ENCODE measurements at regions of chr19 and their contacts with region 1.

Region 1: DNA sequence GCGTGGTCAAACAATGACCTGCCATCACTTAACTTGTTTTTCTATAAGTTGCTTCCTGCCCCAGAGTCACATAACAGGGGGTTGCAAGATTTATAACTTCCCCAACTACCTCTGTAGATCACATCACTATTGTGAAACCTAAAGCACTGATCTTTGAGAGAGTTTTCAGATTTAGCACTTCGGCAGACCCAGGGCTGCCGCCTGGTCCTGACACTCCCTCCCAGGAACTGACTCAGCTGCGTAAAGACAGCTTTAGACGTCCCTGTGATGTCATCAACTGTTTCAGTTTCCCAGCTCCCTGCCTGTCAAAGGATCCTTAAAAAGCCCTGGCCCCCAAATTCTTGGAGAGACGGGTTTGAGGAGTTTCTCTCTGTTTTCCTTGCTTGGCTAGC is 33.3 kb downstream of the IGFL2 start:
- DNase-seq: no peak

Region 2: DNA sequence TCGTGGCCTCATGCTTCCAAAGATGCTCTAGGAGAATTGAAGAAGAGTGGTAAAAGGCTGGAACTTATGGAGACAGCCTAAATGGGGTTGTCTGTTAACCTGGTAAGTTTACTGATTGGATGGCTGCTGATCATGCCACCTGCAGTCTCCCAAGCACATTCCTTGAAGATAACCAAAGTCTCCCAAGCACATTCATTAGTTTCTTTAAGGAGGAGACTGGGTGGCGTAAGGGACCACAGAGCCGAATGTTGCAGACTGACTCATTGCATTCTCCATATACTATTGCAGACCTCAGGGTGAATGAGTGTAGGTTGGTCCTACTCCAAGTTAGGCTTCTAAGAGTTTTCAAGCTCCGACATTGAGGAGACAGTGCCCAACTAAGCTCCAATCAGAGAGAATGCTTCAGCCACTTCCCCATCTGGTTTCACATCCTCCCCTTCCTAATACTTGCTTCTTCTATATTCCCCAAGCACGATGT is 56.7 kb before region 1 on chr19 and contains the start of gene IGFL3:
- intact Hi-C with region 1: loop called in 1 of 2 experiments (anchors 5 kb)
- DNase-seq: no peak
- total RNA-seq, gene IGFL3: not detected

Region 3: GRCh38 chr19:46192992-46193650 is 11.7 kb after region 1 on chr19:
- intact Hi-C with region 1: no loop called
- DNase-seq: no peak

Region 4: GRCh38 chr19:46232029-46232428 is 50.6 kb after region 1 on chr19:
- intact Hi-C with region 1: no loop called
- DNase-seq: no peak

Region 5: GRCh38 chr19:47582320-47582909 is 1401.0 kb after region 1 on chr19:
- intact Hi-C with region 1: loop called in 1 of 2 experiments (anchors 10 kb)
- DNase-seq: no peak

Measured in posterior vena cava (tissue), 2 donors.